Breast epithelium (tissue), 4 donors: ENCODE measurements at regions of chr15 and their contacts with region 1.

Region 1: GRCh38 chr15:43230640-43231115 is 9.9 kb upstream of the EPB42 start:
- DNase-seq: no peak
- H3K4me3 ChIP-seq: no peak overlapping the region
- H3K27ac ChIP-seq: peak overlapping the region; percentile 66 to 67
- H3K4me1 ChIP-seq: no peaks in the 10 kb centered on the region
- H3K27me3 ChIP-seq: no peaks in the 10 kb centered on the region
- CTCF ChIP-seq: no peak
- POLR2A ChIP-seq: no peak

Region 2: GRCh38 chr15:43204016-43204901 is 26.4 kb before region 1 on chr15:
- intact Hi-C with region 1: no loop called
- DNase-seq: no peak
- H3K4me3 ChIP-seq: no peak overlapping the region
- H3K27ac ChIP-seq: no peak overlapping the region
- H3K4me1 ChIP-seq: no peaks in the 10 kb centered on the region
- H3K27me3 ChIP-seq: no peaks in the 10 kb centered on the region
- CTCF ChIP-seq: peak in 2 of 3 donors; percentile 46 to 68
- POLR2A ChIP-seq: no peak

Region 3: DNA sequence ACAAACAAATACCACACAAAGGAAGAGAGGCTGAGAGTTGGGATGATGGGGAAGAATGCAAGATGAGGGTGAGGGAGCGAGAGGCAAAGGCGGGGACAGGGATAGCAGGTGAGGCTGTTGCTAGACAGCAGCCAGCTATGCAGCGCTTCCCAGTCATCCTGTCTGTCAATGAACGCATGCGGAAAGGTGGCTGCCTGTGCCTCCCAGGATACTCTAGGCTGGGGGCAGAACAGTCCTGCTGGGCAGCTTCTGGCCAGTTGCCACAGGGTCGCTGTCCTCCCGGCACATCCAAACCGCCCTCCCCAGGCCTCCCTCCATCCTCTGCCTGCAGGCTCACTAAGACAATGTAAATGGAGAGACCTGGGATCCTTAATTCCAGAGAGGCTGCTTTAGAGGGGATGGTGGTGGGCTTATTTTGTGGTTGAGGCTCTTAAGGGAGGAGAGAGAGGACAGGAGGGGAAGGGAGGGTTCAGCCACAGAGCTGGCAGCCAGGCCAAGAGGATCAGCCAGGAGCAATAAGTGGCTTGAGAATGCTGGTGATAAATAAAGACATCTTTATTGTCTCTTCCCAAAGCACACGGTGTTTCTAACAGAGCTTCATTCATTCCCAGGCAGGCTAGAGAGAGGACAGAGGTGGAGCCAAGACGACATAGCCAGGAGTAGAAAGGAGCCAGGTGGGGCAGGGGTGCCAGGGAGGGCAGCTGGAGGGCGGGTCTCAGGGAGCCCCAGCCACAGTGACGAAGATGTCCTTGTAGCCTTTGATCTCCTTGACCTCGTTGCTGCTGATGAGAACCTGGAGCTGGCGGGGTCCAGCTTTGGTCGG is 45.3 kb after region 1 on chr15:
- intact Hi-C with region 1: loop called (anchors 5 kb)
- DNase-seq: peak in 1 of 2 donors; percentile 70
- H3K4me3 ChIP-seq: peak overlapping the region in 1 of 3 donors; percentile 16
- H3K27ac ChIP-seq: peak overlapping the region; percentile 85 to 87
- H3K4me1 ChIP-seq: no peaks in the 10 kb centered on the region
- H3K27me3 ChIP-seq: no peaks in the 10 kb centered on the region
- CTCF ChIP-seq: no peak
- POLR2A ChIP-seq: no peak

Region 4: DNA sequence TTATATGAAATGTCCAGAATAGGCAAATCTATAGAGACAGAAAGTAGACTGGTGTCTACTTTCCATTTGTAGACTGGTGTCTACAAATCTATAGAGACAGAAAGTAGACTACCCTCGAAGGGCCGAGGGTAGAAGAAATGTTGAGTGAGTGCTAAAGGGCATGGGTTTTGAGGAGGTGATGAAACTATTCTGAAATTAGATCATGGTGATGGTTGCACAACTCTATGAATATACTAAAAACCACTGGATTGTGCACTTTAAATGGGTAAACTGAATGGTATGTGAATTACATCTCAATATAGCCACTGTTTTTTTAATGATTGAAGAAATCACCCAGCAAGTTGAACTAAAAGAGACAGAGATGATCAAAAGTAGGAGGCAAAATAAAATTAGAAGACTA is 234.4 kb after region 1 on chr15:
- intact Hi-C with region 1: no loop called
- DNase-seq: no peak
- H3K4me3 ChIP-seq: no peak overlapping the region
- H3K27ac ChIP-seq: no peak overlapping the region
- H3K4me1 ChIP-seq: no peaks in the 10 kb centered on the region
- H3K27me3 ChIP-seq: no peaks in the 10 kb centered on the region
- CTCF ChIP-seq: no peak
- POLR2A ChIP-seq: no peak